ENCODE measurements at regions of chr16 and their contacts with region 1.

Region 1: DNA sequence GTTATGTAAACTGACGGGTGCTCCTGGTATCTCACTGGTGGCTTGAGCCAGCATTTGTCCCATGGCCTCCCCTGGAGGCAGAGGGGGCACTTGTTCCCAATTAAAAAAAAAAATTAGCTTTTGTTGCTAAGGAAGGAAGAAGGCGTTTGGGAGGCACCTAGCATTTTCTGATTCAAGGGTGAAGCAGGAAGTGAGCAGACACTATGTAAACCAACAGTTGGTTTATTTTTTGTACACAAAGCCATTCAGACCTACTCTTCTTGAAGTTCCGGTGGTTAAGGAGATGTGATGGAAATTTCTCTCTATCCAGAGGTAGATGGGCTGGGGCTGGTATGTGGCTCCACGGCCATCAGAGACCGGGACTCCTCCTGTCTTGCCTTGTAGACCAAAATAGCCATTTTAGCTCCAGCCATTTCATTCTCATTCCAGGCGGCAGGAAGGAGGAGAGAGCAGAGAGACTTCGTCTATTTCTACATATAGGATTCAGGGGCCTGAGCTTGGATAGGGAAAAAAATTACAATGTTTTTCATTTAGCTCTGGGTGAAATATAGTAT is 103.0 kb downstream of the SNX29 start:
- DNase-seq: no peak
- H3K4me3 Mint-ChIP-seq: peak overlapping the region; percentile 59
- H3K27ac Mint-ChIP-seq: peak overlapping the region; percentile 96
- H3K4me1 Mint-ChIP-seq: peaks cover 74% of the 10 kb centered on the region
- H3K27me3 Mint-ChIP-seq: no peaks in the 10 kb centered on the region

Region 2: GRCh38 chr16:11667824-11668622 is 411.5 kb before region 1 on chr16 and contains the start of gene SNN:
- CTCF ChIA-PET with region 1: no interaction called
- intact Hi-C with region 1: loop called (anchors 1 kb)
- DNase-seq: peak; percentile 89
- H3K4me3 Mint-ChIP-seq: peak within 1 kb of the TSS; percentile 72
- H3K27ac Mint-ChIP-seq: no peak within 1 kb of the TSS
- H3K4me1 Mint-ChIP-seq: peaks cover 71% of the 10 kb centered on the region
- H3K27me3 Mint-ChIP-seq: no peaks in the 10 kb centered on the region
- total RNA-seq, gene SNN: 12.0 to 13.6 TPM

Region 3: GRCh38 chr16:11851294-11852091 is 228.0 kb before region 1 on chr16 and contains the start of gene RSL1D1:
- CTCF ChIA-PET with region 1: no interaction called
- intact Hi-C with region 1: loop called (anchors 2 kb)
- DNase-seq: peak; percentile 93
- H3K4me3 Mint-ChIP-seq: peak within 1 kb of the TSS; percentile 98
- H3K27ac Mint-ChIP-seq: peak within 1 kb of the TSS; percentile 90
- H3K4me1 Mint-ChIP-seq: peaks cover 61% of the 10 kb centered on the region
- H3K27me3 Mint-ChIP-seq: no peaks in the 10 kb centered on the region
- total RNA-seq, gene RSL1D1: 354 to 365 TPM

Region 4: DNA sequence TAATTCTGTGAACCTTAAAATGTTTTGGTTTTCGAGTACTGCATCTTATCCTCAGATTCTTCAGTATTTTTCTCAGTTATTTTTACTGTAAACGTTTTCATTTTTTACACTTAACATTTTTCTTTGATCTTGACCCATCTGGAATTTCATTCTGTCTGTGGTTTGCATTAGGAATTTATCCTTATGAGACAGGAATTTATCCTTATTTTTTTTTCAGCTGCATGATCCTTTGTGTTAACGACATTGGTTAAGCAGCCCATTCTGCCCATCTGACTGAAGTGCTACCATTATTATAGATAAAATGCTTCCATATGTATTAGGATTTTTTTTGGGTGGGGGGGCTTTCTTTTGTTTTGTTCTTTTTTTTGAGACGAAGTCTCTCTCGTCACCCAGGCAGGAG is 61.9 kb before region 1 on chr16:
- CTCF ChIA-PET with region 1: no interaction called
- intact Hi-C with region 1: no loop called
- DNase-seq: no peak
- H3K4me3 Mint-ChIP-seq: no peak overlapping the region
- H3K27ac Mint-ChIP-seq: no peak overlapping the region
- H3K4me1 Mint-ChIP-seq: no peaks in the 10 kb centered on the region
- H3K27me3 Mint-ChIP-seq: no peaks in the 10 kb centered on the region

Region 5: GRCh38 chr16:12089492-12090150 is 10.1 kb after region 1 on chr16:
- CTCF ChIA-PET with region 1: interaction called, 34 read pairs
- intact Hi-C with region 1: loop called (anchors 1 kb)
- DNase-seq: peak; percentile 77
- H3K4me3 Mint-ChIP-seq: peak overlapping the region; percentile 78
- H3K27ac Mint-ChIP-seq: peak overlapping the region; percentile 88
- H3K4me1 Mint-ChIP-seq: peaks cover 35% of the 10 kb centered on the region
- H3K27me3 Mint-ChIP-seq: no peaks in the 10 kb centered on the region

Region 6: DNA sequence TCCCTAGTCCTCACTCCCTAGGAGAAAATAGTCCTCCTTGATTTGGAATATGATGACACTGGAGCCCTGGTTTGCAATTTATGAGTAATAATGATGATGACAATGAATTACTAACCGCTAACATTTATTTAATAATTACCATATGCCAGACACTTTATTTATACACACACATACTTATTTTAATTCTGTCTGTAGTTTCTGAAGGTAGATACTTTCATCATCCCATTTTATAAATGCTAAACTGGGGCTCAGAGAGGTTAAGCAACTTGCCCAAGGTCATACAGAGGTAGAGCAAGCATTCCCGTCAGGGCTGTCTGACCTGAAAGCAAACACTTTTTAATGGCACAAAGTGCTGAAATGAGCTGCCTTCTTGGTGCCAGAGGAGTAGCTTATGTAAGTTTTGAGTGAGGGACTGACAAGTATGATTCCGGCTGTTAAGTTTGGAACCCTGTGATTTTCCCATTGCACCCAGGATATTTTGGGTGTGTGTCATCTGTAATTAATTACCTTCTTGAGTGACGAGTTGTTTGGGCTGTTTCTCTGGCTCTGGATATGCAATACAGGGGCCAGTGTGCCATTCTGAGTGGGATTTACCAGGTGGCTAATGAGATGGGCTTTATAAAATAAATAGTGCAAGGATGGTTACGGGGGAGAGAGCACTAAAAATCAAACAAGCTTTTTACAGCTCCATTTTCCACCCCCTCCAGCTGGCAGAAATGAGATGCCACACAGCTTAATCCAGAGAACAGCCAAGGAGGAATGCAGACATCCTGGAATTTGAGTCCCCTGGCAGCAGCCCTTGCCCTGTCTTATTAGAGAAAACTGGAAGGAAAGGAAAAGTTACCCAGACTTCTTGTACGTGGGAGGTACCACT is 108.8 kb after region 1 on chr16:
- CTCF ChIA-PET with region 1: no interaction called
- intact Hi-C with region 1: no loop called
- DNase-seq: no peak
- H3K4me3 Mint-ChIP-seq: no peak overlapping the region
- H3K27ac Mint-ChIP-seq: no peak overlapping the region
- H3K4me1 Mint-ChIP-seq: peaks cover 3% of the 10 kb centered on the region
- H3K27me3 Mint-ChIP-seq: no peaks in the 10 kb centered on the region

Region 7: GRCh38 chr16:12750554-12750918 is 671.0 kb after region 1 on chr16:
- CTCF ChIA-PET with region 1: no interaction called
- intact Hi-C with region 1: loop called (anchors 1 kb)
- DNase-seq: no peak
- H3K4me3 Mint-ChIP-seq: no peak overlapping the region
- H3K27ac Mint-ChIP-seq: peak overlapping the region; percentile 29
- H3K4me1 Mint-ChIP-seq: peaks cover 25% of the 10 kb centered on the region
- H3K27me3 Mint-ChIP-seq: no peaks in the 10 kb centered on the region